ENCODE measurements at regions of chr19 and their contacts with region 1.

Region 1: GRCh38 chr19:34171877-34172660 is at the start of gene LSM14A:
- DNase-seq: peak; percentile 82 to 96 (median 92)
- ATAC-seq: peak; percentile 86
- H3K4me3 ChIP-seq: peak within 1 kb of the TSS; percentile 76 to 99
- H3K4me3 Mint-ChIP-seq: peak within 1 kb of the TSS; percentile 94
- H3K27ac ChIP-seq: peak within 1 kb of the TSS; percentile 94 to 98
- H3K27ac Mint-ChIP-seq: peak within 1 kb of the TSS; percentile 99
- H3K4me1 ChIP-seq: peaks cover 45% of the 10 kb centered on the region
- H3K4me1 Mint-ChIP-seq: peaks cover 46% of the 10 kb centered on the region
- H3K27me3 ChIP-seq: no peaks in the 10 kb centered on the region
- H3K27me3 Mint-ChIP-seq: no peaks in the 10 kb centered on the region
- CTCF ChIP-seq: no peak
- total RNA-seq, gene LSM14A: 233 to 246 TPM

Region 2: DNA sequence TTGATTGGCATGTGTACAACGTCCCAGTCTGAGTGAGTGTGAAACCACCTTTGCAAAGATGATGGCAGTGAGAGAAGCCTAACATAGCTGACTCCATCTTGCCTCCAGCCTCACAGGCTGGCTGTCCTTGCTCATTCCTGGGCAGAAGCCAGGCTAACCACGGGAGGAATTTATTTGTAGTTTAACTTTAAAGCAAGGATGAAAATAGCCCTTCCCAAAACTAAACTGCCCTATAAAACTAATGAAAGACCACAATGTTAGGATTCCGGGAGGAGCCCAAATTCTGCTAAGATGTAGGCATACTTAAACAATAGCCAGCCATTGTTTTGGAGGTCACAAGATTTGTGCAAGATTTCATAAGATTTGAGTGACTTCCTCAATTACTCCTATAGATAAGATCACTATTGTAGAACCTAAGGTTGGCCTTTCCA is 96.4 kb before region 1 on chr19:
- CTCF ChIA-PET with region 1: no interaction called
- POLR2A ChIA-PET with region 1: no interaction called
- intact Hi-C with region 1: no loop called
- DNase-seq: no peak
- ATAC-seq: no peak
- H3K4me3 ChIP-seq: no peak overlapping the region
- H3K4me3 Mint-ChIP-seq: no peak overlapping the region
- H3K27ac ChIP-seq: no peak overlapping the region
- H3K27ac Mint-ChIP-seq: no peak overlapping the region
- H3K4me1 ChIP-seq: no peaks in the 10 kb centered on the region
- H3K4me1 Mint-ChIP-seq: no peaks in the 10 kb centered on the region
- H3K27me3 ChIP-seq: peaks cover 0 to 2% of the 10 kb centered on the region in 2 experiments
- H3K27me3 Mint-ChIP-seq: peaks cover 36% of the 10 kb centered on the region
- CTCF ChIP-seq: no peak

Region 3: GRCh38 chr19:34134190-34135053 is 37.6 kb before region 1 on chr19:
- CTCF ChIA-PET with region 1: no interaction called
- POLR2A ChIA-PET with region 1: interaction called, 13 read pairs
- intact Hi-C with region 1: loop called (anchors 1 to 2 kb)
- DNase-seq: peak; percentile 80 to 97 (median 92)
- ATAC-seq: peak; percentile 99
- H3K4me3 ChIP-seq: peak overlapping the region; percentile 80 to 89
- H3K4me3 Mint-ChIP-seq: peak overlapping the region; percentile 90
- H3K27ac ChIP-seq: peak overlapping the region; percentile 72 to 81
- H3K27ac Mint-ChIP-seq: peak overlapping the region; percentile 90
- H3K4me1 ChIP-seq: peaks cover 7% of the 10 kb centered on the region
- H3K4me1 Mint-ChIP-seq: peaks cover 11% of the 10 kb centered on the region
- H3K27me3 ChIP-seq: no peaks in the 10 kb centered on the region
- H3K27me3 Mint-ChIP-seq: no peaks in the 10 kb centered on the region
- CTCF ChIP-seq: no peak

Region 4: DNA sequence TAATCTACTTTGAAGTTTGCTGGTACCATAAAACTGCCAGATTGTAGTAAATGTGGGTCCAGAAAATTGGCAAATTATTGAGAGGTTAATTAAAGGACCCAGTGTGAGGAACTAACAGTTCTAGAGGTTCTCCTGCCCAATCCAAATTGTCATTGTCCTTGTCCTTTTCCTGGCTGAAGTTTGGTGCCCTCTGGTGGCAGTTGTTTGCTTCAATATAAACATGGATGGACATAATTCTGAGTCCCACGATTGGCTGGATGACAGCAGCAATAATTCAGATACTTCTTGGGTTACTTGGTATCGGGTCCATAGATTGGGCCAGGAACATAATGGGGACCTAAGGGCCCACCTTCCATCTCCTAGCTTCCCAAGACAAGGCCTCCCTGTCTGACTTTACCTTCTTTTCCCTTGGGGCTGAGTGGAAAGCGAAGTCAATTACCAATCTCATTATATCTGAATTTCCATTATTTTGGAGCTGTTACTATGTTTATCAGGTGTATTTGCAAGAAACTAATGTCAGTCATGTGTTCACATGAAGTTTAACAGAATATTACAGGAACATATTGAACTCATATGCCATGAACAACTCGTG is 48.5 kb after region 1 on chr19:
- CTCF ChIA-PET with region 1: interaction called, 3 read pairs
- POLR2A ChIA-PET with region 1: interaction called, 11 read pairs
- intact Hi-C with region 1: loop called (anchors 2 kb)
- DNase-seq: peak; percentile 24 to 78 (median 65)
- ATAC-seq: no peak
- H3K4me3 ChIP-seq: no peak overlapping the region
- H3K4me3 Mint-ChIP-seq: no peak overlapping the region
- H3K27ac ChIP-seq: no peak overlapping the region
- H3K27ac Mint-ChIP-seq: peak overlapping the region; percentile 8
- H3K4me1 ChIP-seq: peaks cover 28% of the 10 kb centered on the region
- H3K4me1 Mint-ChIP-seq: peaks cover 58% of the 10 kb centered on the region
- H3K27me3 ChIP-seq: no peaks in the 10 kb centered on the region
- H3K27me3 Mint-ChIP-seq: no peaks in the 10 kb centered on the region
- CTCF ChIP-seq: peak; percentile 81

Region 5: GRCh38 chr19:34269968-34270621 is 98.0 kb after region 1 on chr19:
- CTCF ChIA-PET with region 1: no interaction called
- POLR2A ChIA-PET with region 1: interaction called, 9 read pairs
- intact Hi-C with region 1: loop called in 1 of 2 experiments (anchors 5 kb)
- DNase-seq: peak; percentile 42 to 91 (median 72)
- ATAC-seq: peak; percentile 92
- H3K4me3 ChIP-seq: peak overlapping the region; percentile 4 to 5
- H3K4me3 Mint-ChIP-seq: peak overlapping the region; percentile 55
- H3K27ac ChIP-seq: peak overlapping the region; percentile 57 to 82
- H3K27ac Mint-ChIP-seq: peak overlapping the region; percentile 97
- H3K4me1 ChIP-seq: peaks cover 69% of the 10 kb centered on the region
- H3K4me1 Mint-ChIP-seq: peaks cover 80% of the 10 kb centered on the region
- H3K27me3 ChIP-seq: no peaks in the 10 kb centered on the region
- H3K27me3 Mint-ChIP-seq: no peaks in the 10 kb centered on the region
- CTCF ChIP-seq: no peak

Region 6: DNA sequence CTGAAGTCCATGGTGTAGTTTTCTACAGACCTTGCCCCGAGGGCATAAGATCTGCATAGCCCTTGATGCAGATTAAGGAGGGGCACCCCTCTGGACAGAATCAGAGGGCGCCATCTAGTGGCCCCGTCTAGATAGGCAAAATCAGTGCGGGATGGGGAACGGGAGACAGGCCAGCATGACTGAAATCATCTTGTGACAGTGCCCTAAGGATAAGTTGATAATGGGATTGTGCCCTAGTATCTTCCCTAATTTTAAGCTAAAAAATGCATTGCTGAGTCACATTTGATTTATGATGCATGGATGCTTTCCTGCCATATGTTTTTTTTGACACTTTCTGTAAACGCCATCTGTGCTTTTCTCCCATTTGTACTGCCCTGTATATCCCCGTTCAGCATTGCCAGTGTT is 173.9 kb after region 1 on chr19:
- CTCF ChIA-PET with region 1: no interaction called
- POLR2A ChIA-PET with region 1: no interaction called
- intact Hi-C with region 1: loop called in 1 of 2 experiments (anchors 5 kb)
- DNase-seq: peak; percentile 37 to 79 (median 73)
- ATAC-seq: no peak
- H3K4me3 ChIP-seq: no peak overlapping the region
- H3K4me3 Mint-ChIP-seq: no peak overlapping the region
- H3K27ac ChIP-seq: no peak overlapping the region
- H3K27ac Mint-ChIP-seq: no peak overlapping the region
- H3K4me1 ChIP-seq: peaks cover 19% of the 10 kb centered on the region
- H3K4me1 Mint-ChIP-seq: peaks cover 19% of the 10 kb centered on the region
- H3K27me3 ChIP-seq: no peaks in the 10 kb centered on the region
- H3K27me3 Mint-ChIP-seq: no peaks in the 10 kb centered on the region
- CTCF ChIP-seq: peak; percentile 82

Region 7: GRCh38 chr19:34404109-34404897 is 232.2 kb after region 1 on chr19 and contains the start of gene PDCD2L:
- CTCF ChIA-PET with region 1: no interaction called
- POLR2A ChIA-PET with region 1: no interaction called
- intact Hi-C with region 1: loop called in 1 of 2 experiments (anchors 1 kb)
- DNase-seq: peak; percentile 81 to 96 (median 94)
- ATAC-seq: peak; percentile 97
- H3K4me3 ChIP-seq: peak within 1 kb of the TSS; percentile 84 to 98
- H3K4me3 Mint-ChIP-seq: peak within 1 kb of the TSS; percentile 93
- H3K27ac ChIP-seq: peak within 1 kb of the TSS; percentile 49 to 74
- H3K27ac Mint-ChIP-seq: peak within 1 kb of the TSS; percentile 88
- H3K4me1 ChIP-seq: peaks cover 3% of the 10 kb centered on the region
- H3K4me1 Mint-ChIP-seq: peaks cover 20% of the 10 kb centered on the region
- H3K27me3 ChIP-seq: no peaks in the 10 kb centered on the region
- H3K27me3 Mint-ChIP-seq: no peaks in the 10 kb centered on the region
- CTCF ChIP-seq: no peak
- total RNA-seq, gene PDCD2L: 6.1 to 6.5 TPM

Region 8: GRCh38 chr19:34677386-34678084 is 505.5 kb after region 1 on chr19 and contains the start of gene ZNF302:
- CTCF ChIA-PET with region 1: no interaction called
- POLR2A ChIA-PET with region 1: no interaction called
- intact Hi-C with region 1: loop called in 1 of 2 experiments (anchors 5 kb)
- DNase-seq: peak; percentile 86 to 97 (median 94)
- ATAC-seq: peak; percentile 87
- H3K4me3 ChIP-seq: peak within 1 kb of the TSS; percentile 85 to 94
- H3K4me3 Mint-ChIP-seq: peak within 1 kb of the TSS; percentile 99
- H3K27ac ChIP-seq: peak within 1 kb of the TSS; percentile 80 to 86
- H3K27ac Mint-ChIP-seq: peak within 1 kb of the TSS; percentile 100
- H3K4me1 ChIP-seq: peaks cover 23% of the 10 kb centered on the region
- H3K4me1 Mint-ChIP-seq: peaks cover 36% of the 10 kb centered on the region
- H3K27me3 ChIP-seq: no peaks in the 10 kb centered on the region
- H3K27me3 Mint-ChIP-seq: peaks cover 10% of the 10 kb centered on the region
- CTCF ChIP-seq: no peak
- total RNA-seq, gene ZNF302: 8.0 to 10.5 TPM

Measured in CD8-positive, alpha-beta T cell (primary cell).